Endothelial cell of umbilical vein (primary cell): ENCODE measurements at regions of chr15 and their contacts with region 1.

Region 1: DNA sequence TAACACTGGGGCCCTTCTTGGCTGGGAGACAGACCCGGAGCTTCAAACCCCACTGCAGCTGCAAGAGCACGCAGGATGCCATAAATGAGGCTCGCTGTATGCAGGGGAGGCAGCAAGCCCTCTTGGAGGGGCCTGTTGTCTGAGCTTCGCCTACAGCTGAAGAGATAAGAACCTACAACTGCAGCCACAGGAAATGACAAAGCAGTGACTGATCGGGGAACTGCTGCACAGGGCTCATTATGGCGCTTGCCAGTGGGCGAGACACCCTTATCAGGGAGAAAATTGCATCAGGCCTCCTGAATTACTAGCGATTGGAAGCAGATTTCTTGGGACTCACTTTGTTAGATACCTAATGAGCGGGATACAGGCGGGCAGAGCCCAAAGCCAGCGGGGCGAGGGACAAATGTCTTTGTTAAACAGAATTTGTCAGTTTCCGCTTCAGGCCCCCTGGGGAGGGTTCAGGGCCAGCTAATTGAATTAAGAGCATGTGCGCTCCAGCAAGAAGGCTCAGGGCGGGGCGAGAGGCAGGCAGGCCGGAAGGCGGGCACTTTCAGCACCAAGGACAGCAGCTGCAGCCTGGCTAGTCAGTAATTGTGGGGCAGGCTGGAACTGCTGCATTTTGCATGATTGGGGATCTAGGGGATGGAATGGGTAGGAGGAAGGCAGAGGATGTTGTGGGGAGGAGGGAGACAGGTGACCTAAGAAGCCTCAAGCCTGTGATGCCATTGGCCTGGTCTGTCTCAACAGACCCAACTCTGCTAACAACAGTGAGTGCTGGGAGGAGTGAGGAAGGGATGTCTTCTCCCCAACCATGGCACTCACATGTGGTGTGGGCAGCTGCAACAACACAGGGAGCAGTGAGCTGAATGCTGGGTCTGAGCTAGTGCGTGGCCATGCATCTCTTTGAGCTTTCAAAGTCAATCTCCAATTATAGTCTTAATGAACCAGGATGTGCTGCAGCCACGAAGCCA is 55.3 kb downstream of the CCDC33 start:
- DNase-seq: peak; percentile 60
- H3K4me3 ChIP-seq: no peak overlapping the region
- H3K27ac ChIP-seq: no peak overlapping the region
- H3K4me1 ChIP-seq: peaks cover 4% of the 10 kb centered on the region
- H3K27me3 ChIP-seq: no peaks in the 10 kb centered on the region
- CTCF ChIP-seq: no peak
- POLR2A ChIP-seq: no peak

Region 2: GRCh38 chr15:74265046-74265639 is 26.2 kb before region 1 on chr15:
- CTCF ChIA-PET with region 1: interaction called, 4 read pairs
- POLR2A ChIA-PET with region 1: no interaction called
- dilution Hi-C with region 1: no loop called
- intact Hi-C with region 1: loop called (anchors 2 kb)
- DNase-seq: peak; percentile 2
- H3K4me3 ChIP-seq: no peak overlapping the region
- H3K27ac ChIP-seq: no peak overlapping the region
- H3K4me1 ChIP-seq: no peaks in the 10 kb centered on the region
- H3K27me3 ChIP-seq: no peaks in the 10 kb centered on the region
- CTCF ChIP-seq: no peak
- POLR2A ChIP-seq: no peak

Region 3: GRCh38 chr15:74511583-74511982 is 220.2 kb after region 1 on chr15:
- CTCF ChIA-PET with region 1: no interaction called
- POLR2A ChIA-PET with region 1: no interaction called
- dilution Hi-C with region 1: no loop called
- intact Hi-C with region 1: no loop called
- DNase-seq: no peak
- H3K4me3 ChIP-seq: no peak overlapping the region
- H3K27ac ChIP-seq: peak overlapping the region; percentile 74
- H3K4me1 ChIP-seq: peaks cover 19% of the 10 kb centered on the region
- H3K27me3 ChIP-seq: no peaks in the 10 kb centered on the region
- CTCF ChIP-seq: no peak
- POLR2A ChIP-seq: no peak